ENCODE measurements at regions of chr9 and their contacts with region 1.

Region 1: DNA sequence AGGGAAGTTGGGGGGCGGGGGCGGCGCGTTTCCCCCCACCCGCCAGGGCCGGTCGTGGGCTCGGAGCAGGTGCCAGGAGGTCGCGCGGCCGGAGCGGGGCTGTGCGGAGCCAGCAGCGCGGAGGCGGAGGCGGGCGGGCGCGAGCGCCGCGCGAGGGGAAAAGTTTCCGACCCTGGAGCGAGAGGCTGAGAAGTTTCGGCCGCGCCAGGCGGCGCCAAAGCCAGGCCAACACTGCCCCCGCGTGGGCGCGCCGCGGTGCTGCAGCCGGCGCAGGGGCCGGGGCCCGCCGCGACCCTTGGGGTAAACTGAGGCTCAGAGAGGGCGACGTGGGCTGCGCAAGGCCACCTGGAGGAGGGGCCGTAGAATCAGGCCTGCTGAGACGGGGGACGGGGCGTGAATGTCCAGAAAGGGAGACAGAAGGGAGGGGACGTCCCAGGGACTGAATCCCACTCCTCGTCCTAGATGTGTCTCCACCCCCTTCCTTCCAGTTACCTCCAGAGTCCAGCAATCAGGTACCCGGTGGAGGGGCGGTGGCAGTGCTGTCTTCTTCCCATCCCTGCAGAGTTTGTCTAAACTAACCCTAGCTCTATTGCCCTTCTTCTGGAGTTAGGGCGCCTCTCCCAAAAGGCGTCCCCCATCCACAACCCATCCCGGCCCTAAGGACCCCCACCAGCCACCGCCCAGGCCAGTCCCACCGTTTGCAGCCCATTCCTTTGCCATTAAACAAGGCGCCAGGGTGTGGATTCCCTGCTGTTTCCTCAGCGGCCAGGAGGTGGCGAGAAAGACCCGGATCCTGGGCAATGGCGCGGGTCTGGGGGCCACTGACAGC is 10.2 kb downstream of the C9orf50 start:
- DNase-seq: peak; percentile 48
- ATAC-seq: peak; percentile 57
- H3K4me3 ChIP-seq: peak overlapping the region; percentile 69 to 87 (median 81)
- H3K27ac ChIP-seq: peak overlapping the region; percentile 58
- H3K4me1 ChIP-seq: peaks cover 62% of the 10 kb centered on the region
- H3K27me3 ChIP-seq: no peaks in the 10 kb centered on the region
- CTCF ChIP-seq: peak; percentile 81
- EP300 ChIP-seq: no peak
- POLR2A ChIP-seq: no peak
- RAD21 ChIP-seq: peak; percentile 100

Region 2: GRCh38 chr9:129139993-129140396 is 470.7 kb before region 1 on chr9:
- CTCF ChIA-PET with region 1: interaction called, 13 read pairs
- POLR2A ChIA-PET with region 1: interaction called, 13 read pairs
- in situ Hi-C with region 1: no loop called
- intact Hi-C with region 1: no loop called
- DNase-seq: peak; percentile 94
- ATAC-seq: peak; percentile 81
- H3K4me3 ChIP-seq: peak overlapping the region; percentile 57 to 75 (median 67)
- H3K27ac ChIP-seq: peak overlapping the region; percentile 98
- H3K4me1 ChIP-seq: peaks cover 51% of the 10 kb centered on the region
- H3K27me3 ChIP-seq: no peaks in the 10 kb centered on the region
- CTCF ChIP-seq: no peak
- EP300 ChIP-seq: peak in 1 of 2 experiments; percentile 63; a peak in 2 of 4 replicates
- POLR2A ChIP-seq: peak; percentile 75 to 78
- RAD21 ChIP-seq: no peak

Region 3: DNA sequence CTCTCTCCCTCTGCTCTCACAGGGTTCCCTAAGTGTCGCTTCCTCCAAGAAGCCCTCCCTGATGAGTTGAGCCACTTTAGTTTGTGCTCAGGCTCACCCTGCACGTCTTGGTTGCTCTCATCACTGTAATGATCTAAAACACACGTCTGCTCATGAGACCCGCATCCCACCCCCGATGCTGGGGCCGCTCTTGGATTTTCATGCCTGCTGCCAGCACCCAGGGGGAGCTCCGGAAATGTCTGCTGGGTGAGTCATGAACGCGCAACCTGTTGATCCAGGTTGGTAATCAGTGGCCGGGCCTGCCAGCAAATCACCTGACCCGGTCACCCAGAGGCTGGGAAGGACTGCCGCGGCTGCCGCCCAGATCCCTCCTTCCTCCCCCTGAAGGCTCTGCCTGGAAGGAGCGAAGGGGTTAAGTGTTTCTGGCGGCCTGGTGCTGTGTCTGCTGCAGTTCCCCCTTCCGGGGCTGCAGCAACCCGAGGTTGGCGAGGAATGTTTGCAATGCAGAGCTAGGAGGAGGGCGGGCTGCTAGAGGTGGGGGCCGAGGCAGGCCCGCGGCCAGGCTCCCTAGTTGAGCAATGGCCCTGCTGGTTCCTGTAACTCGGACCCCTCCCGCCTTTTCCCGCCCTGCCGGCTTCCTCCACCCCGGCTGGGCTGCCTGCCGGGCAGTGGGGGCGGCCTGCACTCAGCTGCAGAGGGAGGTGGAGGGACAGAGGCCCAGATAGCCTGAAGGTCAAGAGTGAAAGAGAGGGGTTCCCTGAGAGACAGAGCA is 276.5 kb before region 1 on chr9:
- CTCF ChIA-PET with region 1: no interaction called
- POLR2A ChIA-PET with region 1: interaction called, 4 read pairs
- in situ Hi-C with region 1: loop called (anchors 10 kb)
- intact Hi-C with region 1: no loop called
- DNase-seq: peak; percentile 94
- ATAC-seq: peak; percentile 93
- H3K4me3 ChIP-seq: peak overlapping the region in 2 of 3 experiments; percentile 30 to 65; a peak in 4 of 6 replicates
- H3K27ac ChIP-seq: peak overlapping the region; percentile 93
- H3K4me1 ChIP-seq: peaks cover 56% of the 10 kb centered on the region
- H3K27me3 ChIP-seq: no peaks in the 10 kb centered on the region
- CTCF ChIP-seq: peak; percentile 47; the same call in 1 of the 2 replicates
- EP300 ChIP-seq: peak in 1 of 2 experiments; percentile 84; a peak in 2 of 4 replicates
- POLR2A ChIP-seq: no peak
- RAD21 ChIP-seq: peak; percentile 75

Region 4: GRCh38 chr9:129487642-129488409 is 122.9 kb before region 1 on chr9:
- CTCF ChIA-PET with region 1: no interaction called
- POLR2A ChIA-PET with region 1: interaction called, 7 read pairs
- in situ Hi-C with region 1: loop called (anchors 10 kb)
- intact Hi-C with region 1: loop called (anchors 5 kb)
- DNase-seq: no peak
- ATAC-seq: peak; percentile 14
- H3K4me3 ChIP-seq: peak overlapping the region; percentile 68 to 86 (median 72); a peak in 5 of 6 replicates
- H3K27ac ChIP-seq: peak overlapping the region; percentile 91
- H3K4me1 ChIP-seq: peaks cover 87% of the 10 kb centered on the region
- H3K27me3 ChIP-seq: no peaks in the 10 kb centered on the region; a peak in 1 of 5 replicates
- CTCF ChIP-seq: no peak
- EP300 ChIP-seq: no peak
- POLR2A ChIP-seq: peak in 1 of 2 experiments; percentile 41; a peak in 1 of 4 replicates
- RAD21 ChIP-seq: no peak; the same call in 1 of the 2 replicates

Region 5: GRCh38 chr9:129569502-129570449 is 40.9 kb before region 1 on chr9:
- CTCF ChIA-PET with region 1: interaction called, 3 read pairs
- POLR2A ChIA-PET with region 1: interaction called, 10 read pairs
- in situ Hi-C with region 1: no loop called
- intact Hi-C with region 1: loop called (anchors 1 kb)
- DNase-seq: peak; percentile 56
- ATAC-seq: peak; percentile 42
- H3K4me3 ChIP-seq: peak overlapping the region; percentile 38 to 61 (median 50)
- H3K27ac ChIP-seq: peak overlapping the region; percentile 80
- H3K4me1 ChIP-seq: peaks cover 70% of the 10 kb centered on the region
- H3K27me3 ChIP-seq: no peaks in the 10 kb centered on the region; a peak in 1 of 5 replicates
- CTCF ChIP-seq: peak; percentile 75
- EP300 ChIP-seq: no peak
- POLR2A ChIP-seq: no peak
- RAD21 ChIP-seq: peak; percentile 73

Region 6: DNA sequence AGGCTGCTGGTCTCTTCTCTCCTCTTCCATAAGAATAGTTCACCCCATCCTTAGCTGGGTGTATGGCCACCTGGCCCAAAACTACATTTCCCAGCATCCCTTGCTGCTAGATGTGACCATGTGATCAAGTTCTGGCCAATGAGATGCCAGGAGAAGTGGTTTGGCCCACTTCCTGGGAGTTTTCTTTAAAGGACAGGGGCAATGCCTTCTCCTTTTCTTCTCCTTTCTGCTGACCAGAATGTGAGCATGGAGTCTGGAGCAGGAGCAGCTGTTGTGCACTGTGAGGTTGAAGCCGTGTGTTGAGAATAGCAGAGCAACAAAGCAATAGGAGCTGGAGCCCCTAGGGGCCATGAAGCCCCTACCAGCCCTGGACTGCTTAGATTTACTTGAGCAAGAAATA is 26.6 kb before region 1 on chr9:
- CTCF ChIA-PET with region 1: no interaction called
- POLR2A ChIA-PET with region 1: interaction called, 13 read pairs
- in situ Hi-C with region 1: no loop called
- intact Hi-C with region 1: no loop called
- DNase-seq: peak; percentile 82
- ATAC-seq: peak; percentile 74
- H3K4me3 ChIP-seq: no peak overlapping the region
- H3K27ac ChIP-seq: peak overlapping the region; percentile 45
- H3K4me1 ChIP-seq: peaks cover 70% of the 10 kb centered on the region
- H3K27me3 ChIP-seq: no peaks in the 10 kb centered on the region
- CTCF ChIP-seq: no peak
- EP300 ChIP-seq: no peak
- POLR2A ChIP-seq: no peak
- RAD21 ChIP-seq: no peak

Region 7: GRCh38 chr9:129962889-129963703 is 352.4 kb after region 1 on chr9:
- CTCF ChIA-PET with region 1: no interaction called
- POLR2A ChIA-PET with region 1: no interaction called
- in situ Hi-C with region 1: no loop called
- intact Hi-C with region 1: no loop called
- DNase-seq: no peak
- ATAC-seq: no peak
- H3K4me3 ChIP-seq: no peak overlapping the region
- H3K27ac ChIP-seq: no peak overlapping the region
- H3K4me1 ChIP-seq: peaks cover 6% of the 10 kb centered on the region
- H3K27me3 ChIP-seq: no peaks in the 10 kb centered on the region
- CTCF ChIP-seq: no peak
- EP300 ChIP-seq: no peak
- POLR2A ChIP-seq: no peak
- RAD21 ChIP-seq: no peak